Gastrocnemius medialis (tissue), 4 donors: ENCODE measurements at regions of chr7 and their contacts with region 1.

Region 1: DNA sequence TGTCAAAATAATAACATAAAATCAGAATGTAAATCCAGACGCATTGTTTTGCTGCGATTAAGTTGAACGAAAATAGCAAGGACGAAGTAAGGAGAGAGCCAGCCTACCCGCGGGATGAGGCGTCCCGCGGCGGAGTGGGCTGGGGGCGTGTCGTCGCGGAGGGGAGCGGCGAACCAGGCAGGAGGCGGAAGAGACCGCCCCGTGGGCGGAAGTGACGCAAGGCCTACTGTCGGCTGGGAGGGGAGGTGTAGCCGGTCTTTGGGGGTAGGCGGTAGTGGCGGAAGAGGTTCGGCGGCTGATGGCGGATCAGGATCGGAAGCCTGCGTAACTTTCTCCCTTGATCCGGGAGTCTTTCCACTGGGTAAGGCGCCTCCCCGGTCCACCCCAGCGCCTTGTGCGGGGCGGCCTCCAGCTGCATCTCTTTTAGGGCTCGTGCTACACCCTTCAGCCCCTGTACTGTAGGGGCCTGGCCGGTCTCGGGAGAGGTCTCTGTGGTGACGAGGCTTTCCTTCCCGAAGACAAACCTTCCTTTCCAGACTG is at the start of gene TAX1BP1:
- DNase-seq: peak; percentile 93 to 94
- ATAC-seq: peak; percentile 95 to 97
- H3K4me3 ChIP-seq: peak within 1 kb of the TSS; percentile 86 to 98 (median 96)
- H3K27ac ChIP-seq: peak within 1 kb of the TSS; percentile 94 to 99 (median 98)
- H3K4me1 ChIP-seq: peaks cover 24 to 30% of the 10 kb centered on the region in 2 donors
- H3K27me3 ChIP-seq: no peaks in the 10 kb centered on the region
- CTCF ChIP-seq: no peak
- POLR2A ChIP-seq: peak; percentile 96 to 97
- total RNA-seq, gene TAX1BP1: 110 to 136 (median 113) TPM

Region 2: GRCh38 chr7:27662490-27663205 is 77.3 kb before region 1 on chr7 and contains the start of gene HIBADH:
- in situ Hi-C with region 1: loop called in 2 of 4 experiments (anchors 5 to 10 kb)
- intact Hi-C with region 1: loop called (anchors 1 kb)
- DNase-seq: peak; percentile 99 to 100
- ATAC-seq: peak; percentile 96 to 98
- H3K4me3 ChIP-seq: peak within 1 kb of the TSS; percentile 73 to 99 (median 92)
- H3K27ac ChIP-seq: peak within 1 kb of the TSS; percentile 95 to 100 (median 97)
- H3K4me1 ChIP-seq: peaks cover 10 to 14% of the 10 kb centered on the region in 2 donors
- H3K27me3 ChIP-seq: no peaks in the 10 kb centered on the region
- CTCF ChIP-seq: peak; percentile 12 to 46 (median 29)
- POLR2A ChIP-seq: peak; percentile 96 to 99
- total RNA-seq, gene HIBADH: 42.2 to 56.4 (median 49.0) TPM

Region 3: DNA sequence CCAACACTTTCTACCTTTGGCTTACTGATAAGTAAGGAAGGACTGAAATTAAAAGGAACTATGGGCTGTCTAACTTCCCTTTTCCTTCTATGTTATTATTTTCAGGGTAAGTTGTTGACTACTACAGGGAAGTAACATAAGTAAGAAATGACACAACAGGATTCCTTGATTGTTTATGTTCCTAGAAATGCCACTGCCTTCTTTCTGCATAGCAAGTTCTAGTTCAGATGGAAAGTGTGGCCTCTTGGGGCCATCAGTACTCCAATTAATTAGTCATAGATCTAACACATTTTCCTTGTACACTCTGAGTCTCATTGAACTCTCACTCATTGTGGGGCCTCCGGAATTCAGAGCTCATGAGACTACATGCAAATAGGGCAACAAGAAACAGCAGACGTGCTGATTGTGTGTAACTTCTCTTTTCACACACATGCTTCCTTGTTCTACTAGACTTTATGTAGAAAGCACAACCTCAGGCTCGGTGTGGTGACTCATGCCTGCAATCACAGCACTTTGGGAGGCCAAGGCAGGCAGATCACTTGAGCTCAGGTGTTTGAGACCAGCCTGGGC is 42.0 kb before region 1 on chr7:
- in situ Hi-C with region 1: no loop called
- intact Hi-C with region 1: loop called (anchors 1 kb)
- DNase-seq: peak in 1 of 2 donors; percentile 31
- ATAC-seq: no peak
- H3K4me3 ChIP-seq: no peak overlapping the region
- H3K27ac ChIP-seq: no peak overlapping the region
- H3K4me1 ChIP-seq: no peaks in the 10 kb centered on the region
- H3K27me3 ChIP-seq: no peaks in the 10 kb centered on the region
- CTCF ChIP-seq: no peak
- POLR2A ChIP-seq: no peak

Region 4: DNA sequence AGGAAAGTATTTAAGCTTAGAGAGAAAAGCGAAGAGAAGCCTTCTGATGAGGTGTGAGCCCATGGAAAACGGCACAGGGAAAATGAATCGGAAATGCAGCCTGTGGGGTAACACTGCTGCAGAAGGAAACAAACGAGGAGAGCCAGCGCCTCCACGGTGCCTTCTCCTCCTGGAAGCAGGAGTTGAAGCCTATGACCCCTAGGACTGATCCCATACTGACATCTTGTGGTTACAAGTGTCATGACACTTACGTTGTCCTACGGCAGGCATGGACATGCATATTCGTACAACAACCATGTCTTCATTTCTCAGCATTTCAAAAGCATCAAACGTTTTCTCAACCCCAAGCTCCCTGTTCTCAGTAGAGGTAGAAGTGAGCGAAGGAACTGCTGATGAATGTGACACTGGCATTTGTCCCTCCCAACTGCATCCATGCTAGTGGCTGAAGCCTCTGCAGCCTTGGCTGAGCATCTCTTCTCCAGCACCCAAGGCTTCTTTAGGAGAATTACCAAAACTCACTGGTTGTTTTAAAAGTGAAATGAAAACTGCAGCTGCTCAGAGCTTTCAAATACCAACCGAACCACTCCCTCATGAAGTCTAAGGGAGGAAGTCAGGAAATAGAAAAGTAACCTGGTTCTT is 280.4 kb after region 1 on chr7:
- in situ Hi-C with region 1: no loop called
- intact Hi-C with region 1: loop called (anchors 5 kb)
- DNase-seq: peak; percentile 56 to 76
- ATAC-seq: peak; percentile 83 to 89
- H3K4me3 ChIP-seq: no peak overlapping the region
- H3K27ac ChIP-seq: no peak overlapping the region
- H3K4me1 ChIP-seq: peaks cover 22 to 38% of the 10 kb centered on the region in 2 donors
- H3K27me3 ChIP-seq: no peaks in the 10 kb centered on the region
- CTCF ChIP-seq: peak; percentile 80 to 93 (median 87)
- POLR2A ChIP-seq: no peak